ENCODE measurements at regions of chr9 and their contacts with region 1.

Region 1: DNA sequence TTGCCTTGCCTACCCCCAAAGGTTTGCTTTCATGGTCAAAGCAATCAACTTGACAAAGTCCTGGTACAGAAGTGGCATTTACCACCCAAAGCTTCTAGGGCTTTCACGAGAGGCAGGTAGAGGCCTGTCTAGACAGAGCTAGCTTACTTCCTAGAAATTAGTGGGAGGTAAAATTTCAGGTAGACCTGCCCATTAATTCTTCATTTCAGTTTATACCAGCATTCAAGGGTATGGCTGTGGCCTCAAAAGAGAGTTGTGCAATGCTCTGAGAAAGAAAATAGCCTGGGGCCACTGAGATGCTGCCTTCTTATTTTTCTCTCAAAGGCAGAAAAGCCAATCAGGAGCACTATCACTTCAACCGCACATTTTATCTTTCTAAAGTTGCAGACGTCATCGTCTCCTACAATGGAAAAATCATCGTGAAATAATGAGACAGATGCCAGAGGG is 34.9 kb downstream of the STOM start:
- H3K4me3 Mint-ChIP-seq: no peak overlapping the region
- H3K27ac Mint-ChIP-seq: no peak overlapping the region
- H3K4me1 Mint-ChIP-seq: peaks cover 4% of the 10 kb centered on the region
- H3K27me3 Mint-ChIP-seq: no peaks in the 10 kb centered on the region

Region 2: GRCh38 chr9:121369595-121370265 is 34.6 kb after region 1 on chr9 and contains the start of gene STOM:
- intact Hi-C with region 1: loop called (anchors 5 kb)
- H3K4me3 Mint-ChIP-seq: peak within 1 kb of the TSS; percentile 91
- H3K27ac Mint-ChIP-seq: peak within 1 kb of the TSS; percentile 95
- H3K4me1 Mint-ChIP-seq: peaks cover 52% of the 10 kb centered on the region
- H3K27me3 Mint-ChIP-seq: no peaks in the 10 kb centered on the region